ENCODE measurements at regions of chr11 and their contacts with region 1.

Region 1: GRCh38 chr11:19673924-19674729 is 38.5 kb upstream of the NAV2 start:
- DNase-seq: peak; percentile 76 to 95
- H3K4me3 ChIP-seq: no peak overlapping the region
- H3K27ac ChIP-seq: peak overlapping the region; percentile 89 to 91
- H3K4me1 ChIP-seq: peaks cover 9 to 58% of the 10 kb centered on the region in 2 donors
- H3K27me3 ChIP-seq: no peaks in the 10 kb centered on the region
- CTCF ChIP-seq: no peak

Region 2: DNA sequence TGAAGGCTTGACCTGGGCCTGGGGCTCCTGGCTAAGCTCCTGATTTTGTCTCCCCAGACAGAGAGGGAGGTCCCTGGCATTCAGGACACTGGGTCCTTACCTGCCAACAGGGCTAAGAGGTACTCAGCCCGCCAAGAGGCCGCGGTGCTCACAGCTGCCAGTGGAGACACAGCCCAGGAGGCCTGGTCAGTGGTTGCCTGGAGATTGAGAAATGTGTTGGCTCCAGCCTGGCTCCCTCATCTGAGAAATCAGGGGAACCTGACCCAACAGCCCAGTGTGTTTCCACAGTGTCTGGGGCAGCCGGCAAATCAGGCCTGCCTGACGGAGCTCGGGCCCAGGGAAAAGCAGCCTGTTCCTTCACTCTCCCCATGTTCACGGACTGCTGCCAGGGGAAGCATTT is 40.9 kb before region 1 on chr11:
- intact Hi-C with region 1: loop called (anchors 5 kb)
- DNase-seq: peak; percentile 65 to 91
- H3K4me3 ChIP-seq: peak overlapping the region in 1 of 2 donors; percentile 23
- H3K27ac ChIP-seq: peak overlapping the region; percentile 89 to 90
- H3K4me1 ChIP-seq: peaks cover 21 to 46% of the 10 kb centered on the region in 2 donors
- H3K27me3 ChIP-seq: no peaks in the 10 kb centered on the region
- CTCF ChIP-seq: no peak